ENCODE measurements at regions of chr10 and their contacts with region 1.

Region 1: GRCh38 chr10:114821293-114821914 is at the start of gene FHIP2A:
- DNase-seq: peak; percentile 85
- H3K4me3 Mint-ChIP-seq: peak within 1 kb of the TSS; percentile 86
- H3K27ac Mint-ChIP-seq: peak within 1 kb of the TSS; percentile 95
- H3K4me1 Mint-ChIP-seq: peaks cover 42% of the 10 kb centered on the region
- H3K27me3 Mint-ChIP-seq: peaks cover 10% of the 10 kb centered on the region
- total RNA-seq, gene FHIP2A: 34.3 to 39.2 TPM

Region 2: DNA sequence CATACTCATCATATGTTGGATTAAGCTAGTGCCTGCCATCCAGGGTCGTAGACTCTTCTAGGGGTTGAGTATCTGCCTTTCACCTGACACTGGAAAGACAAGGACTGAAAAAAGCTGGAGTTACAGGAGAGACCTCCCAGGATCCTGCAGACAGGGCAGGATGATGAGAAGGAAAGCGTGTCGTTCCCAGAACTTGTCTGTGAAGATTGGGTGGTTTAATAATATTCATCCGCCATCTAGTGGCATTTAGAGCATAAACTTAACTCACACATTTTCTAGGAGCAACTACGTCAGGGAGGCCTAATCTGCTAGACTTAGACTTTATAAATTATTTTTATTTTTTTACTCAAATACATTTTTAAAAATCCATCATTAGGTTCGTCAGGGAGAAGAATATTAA is 718.1 kb before region 1 on chr10:
- CTCF ChIA-PET with region 1: no interaction called
- POLR2A ChIA-PET with region 1: no interaction called
- DNase-seq: no peak
- H3K4me3 Mint-ChIP-seq: no peak overlapping the region
- H3K27ac Mint-ChIP-seq: no peak overlapping the region
- H3K4me1 Mint-ChIP-seq: peaks cover 36% of the 10 kb centered on the region
- H3K27me3 Mint-ChIP-seq: peaks cover 29% of the 10 kb centered on the region

Region 3: GRCh38 chr10:114550756-114551635 is 270.4 kb before region 1 on chr10:
- CTCF ChIA-PET with region 1: interaction called, 12 read pairs
- POLR2A ChIA-PET with region 1: interaction called, 18 read pairs
- DNase-seq: no peak
- H3K4me3 Mint-ChIP-seq: no peak overlapping the region
- H3K27ac Mint-ChIP-seq: no peak overlapping the region
- H3K4me1 Mint-ChIP-seq: peaks cover 23% of the 10 kb centered on the region
- H3K27me3 Mint-ChIP-seq: no peaks in the 10 kb centered on the region

Region 4: DNA sequence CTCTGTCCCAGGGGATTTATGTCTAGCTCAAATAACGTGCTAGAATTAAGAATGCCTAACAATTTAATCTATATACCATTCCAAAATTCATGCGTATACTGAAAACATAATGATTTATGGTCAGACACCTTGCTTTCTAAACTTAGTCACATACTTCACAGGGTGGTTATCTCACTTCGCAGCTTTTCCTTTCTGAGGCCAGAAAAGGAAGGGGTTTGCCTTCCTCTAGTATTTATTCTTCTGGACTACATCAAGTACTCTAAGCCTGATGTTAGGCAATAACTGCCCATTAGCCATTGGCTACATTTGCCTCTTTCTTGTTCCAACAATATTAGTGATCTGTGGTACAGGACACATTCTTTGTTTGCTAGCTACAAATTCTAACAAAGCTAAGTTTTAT is 72.4 kb before region 1 on chr10:
- CTCF ChIA-PET with region 1: no interaction called
- POLR2A ChIA-PET with region 1: no interaction called
- DNase-seq: no peak
- H3K4me3 Mint-ChIP-seq: no peak overlapping the region
- H3K27ac Mint-ChIP-seq: no peak overlapping the region
- H3K4me1 Mint-ChIP-seq: no peaks in the 10 kb centered on the region
- H3K27me3 Mint-ChIP-seq: peaks cover 27% of the 10 kb centered on the region

Region 5: GRCh38 chr10:114801411-114801813 is 20.0 kb before region 1 on chr10:
- CTCF ChIA-PET with region 1: interaction called, 25 read pairs
- POLR2A ChIA-PET with region 1: interaction called, 68 read pairs
- DNase-seq: peak; percentile 56
- H3K4me3 Mint-ChIP-seq: peak overlapping the region; percentile 80
- H3K27ac Mint-ChIP-seq: peak overlapping the region; percentile 94
- H3K4me1 Mint-ChIP-seq: peaks cover 41% of the 10 kb centered on the region
- H3K27me3 Mint-ChIP-seq: no peaks in the 10 kb centered on the region

Region 6: DNA sequence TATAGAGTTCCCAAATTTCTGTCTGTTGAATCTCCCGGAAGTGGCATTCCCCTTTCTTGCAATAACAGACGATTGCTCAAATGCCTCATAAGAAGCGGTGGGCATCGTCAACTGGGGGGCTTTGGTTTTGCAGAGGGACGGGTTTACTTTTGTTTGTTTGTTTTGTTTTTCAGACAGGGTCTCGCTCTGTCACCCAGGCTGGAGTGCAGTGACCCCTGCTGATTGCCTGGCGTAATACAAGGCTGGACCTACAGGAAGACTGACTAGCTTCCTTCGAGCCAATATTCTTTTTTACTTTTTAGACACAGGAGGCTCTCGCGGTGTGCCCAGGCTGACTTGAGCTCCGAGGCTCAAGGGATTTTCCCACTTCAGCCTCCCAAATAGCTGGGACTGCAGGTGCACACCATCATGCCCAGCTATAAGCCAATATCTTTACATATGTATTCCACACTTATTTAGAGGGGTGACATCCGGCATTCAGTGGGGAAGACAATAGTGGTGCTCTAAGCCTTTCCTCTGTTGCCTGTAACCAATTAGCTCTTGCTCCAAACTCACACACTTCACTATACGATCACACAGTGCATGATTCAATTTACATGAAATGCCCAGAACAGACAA is 58.2 kb after region 1 on chr10:
- CTCF ChIA-PET with region 1: interaction called, 15 read pairs
- POLR2A ChIA-PET with region 1: interaction called, 4 read pairs
- DNase-seq: peak; percentile 64
- H3K4me3 Mint-ChIP-seq: no peak overlapping the region
- H3K27ac Mint-ChIP-seq: no peak overlapping the region
- H3K4me1 Mint-ChIP-seq: peaks cover 26% of the 10 kb centered on the region
- H3K27me3 Mint-ChIP-seq: peaks cover 23% of the 10 kb centered on the region